PC-3 (cell line): ENCODE measurements at regions of chr5 and their contacts with region 1.

Region 1: DNA sequence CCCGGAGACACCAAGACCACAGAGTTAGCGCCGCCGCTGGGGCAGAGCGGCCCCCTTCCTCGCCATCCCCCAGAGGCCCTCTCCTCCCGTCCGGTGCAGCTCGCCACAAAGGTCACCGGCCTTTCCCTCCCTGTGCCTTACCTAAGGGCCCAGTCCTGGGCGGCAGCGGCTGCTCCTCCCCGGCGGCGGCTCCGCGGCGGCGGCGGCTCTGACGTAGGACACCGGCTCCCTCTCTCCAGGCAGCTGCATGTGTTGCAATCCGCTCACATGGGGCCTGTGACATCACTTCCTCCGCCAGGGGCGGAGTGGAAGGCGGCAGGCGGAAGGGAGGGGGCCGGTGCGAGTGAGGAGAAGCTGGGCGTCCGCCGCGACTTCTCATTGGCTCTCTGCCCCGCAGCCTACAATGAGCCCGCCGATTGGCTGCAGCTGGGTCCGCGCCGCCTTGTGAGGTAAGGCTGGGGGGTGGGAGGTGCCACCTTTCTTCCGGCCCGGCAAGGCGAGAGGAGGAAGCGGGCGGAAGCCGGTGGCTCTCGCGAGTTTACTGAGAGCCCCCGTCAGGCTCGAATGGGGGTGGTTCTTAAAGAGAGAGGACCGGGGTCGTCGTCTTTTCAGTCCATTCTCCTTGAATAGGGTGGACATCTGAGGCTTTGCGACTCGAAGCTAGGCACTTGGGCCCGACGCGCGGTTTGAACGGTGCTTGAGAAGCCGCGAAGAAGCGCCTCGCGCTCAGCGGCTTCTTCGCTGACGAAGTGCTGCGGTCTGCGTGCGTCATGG is at the start of gene ETF1:
- DNase-seq: peak; percentile 98
- ATAC-seq: peak; percentile 86
- H3K4me3 ChIP-seq: peak within 1 kb of the TSS; percentile 93
- H3K27ac ChIP-seq: peak within 1 kb of the TSS; percentile 83
- H3K4me1 ChIP-seq: peaks cover 38% of the 10 kb centered on the region
- H3K27me3 ChIP-seq: no peaks in the 10 kb centered on the region
- CTCF ChIP-seq: no peak
- total RNA-seq, gene ETF1: 57.3 and 64.1 TPM in 2 replicates

Region 2: DNA sequence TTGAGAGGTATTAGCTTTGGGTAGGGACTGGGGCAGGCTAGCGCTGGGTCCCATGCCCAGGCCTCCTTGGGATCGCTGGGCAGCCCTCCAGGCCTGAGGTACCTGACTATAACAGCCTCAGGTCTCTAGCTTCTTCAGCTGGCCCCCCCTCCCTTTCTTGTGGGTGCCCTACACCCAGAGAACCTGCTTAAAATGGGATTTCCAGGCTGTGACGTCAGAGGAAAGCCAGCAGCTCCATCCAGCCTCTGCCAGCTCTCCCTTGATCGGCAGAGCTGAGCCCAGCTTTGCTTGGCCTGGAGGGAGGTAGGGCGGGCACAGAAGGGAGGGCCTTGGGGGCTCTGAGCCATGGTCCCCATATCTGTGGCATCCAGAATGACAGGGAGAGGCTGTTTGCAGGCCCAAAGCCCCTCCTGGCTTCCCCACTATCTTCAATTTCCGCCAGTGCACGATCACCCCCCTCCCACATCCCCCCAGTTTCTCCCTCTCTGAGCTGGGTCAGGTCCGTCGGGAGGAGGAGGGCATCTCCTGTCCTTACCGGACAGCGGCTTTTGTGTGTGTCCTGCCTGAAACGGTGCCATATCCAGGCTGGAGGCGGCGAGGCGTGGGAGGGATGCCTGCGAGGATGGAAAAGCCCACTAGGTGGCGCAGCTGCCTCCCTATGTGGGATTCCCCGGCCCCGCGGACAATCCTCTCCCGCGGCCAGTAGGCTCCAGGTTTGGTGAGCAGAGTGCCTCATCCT is 93.5 kb before region 1 on chr5:
- CTCF ChIA-PET with region 1: no interaction called
- POLR2A ChIA-PET with region 1: no interaction called
- intact Hi-C with region 1: loop called (anchors 5 kb)
- DNase-seq: peak; percentile 85
- ATAC-seq: peak; percentile 97
- H3K4me3 ChIP-seq: peak overlapping the region; percentile 17; the same call in 1 of the 2 replicates
- H3K27ac ChIP-seq: no peak overlapping the region
- H3K4me1 ChIP-seq: no peaks in the 10 kb centered on the region
- H3K27me3 ChIP-seq: no peaks in the 10 kb centered on the region
- CTCF ChIP-seq: peak; percentile 82

Region 3: GRCh38 chr5:138528208-138528607 is 14.9 kb before region 1 on chr5:
- CTCF ChIA-PET with region 1: no interaction called
- POLR2A ChIA-PET with region 1: interaction called, 11 read pairs
- intact Hi-C with region 1: no loop called
- DNase-seq: no peak
- ATAC-seq: no peak
- H3K4me3 ChIP-seq: no peak overlapping the region
- H3K27ac ChIP-seq: no peak overlapping the region
- H3K4me1 ChIP-seq: peaks cover 8% of the 10 kb centered on the region
- H3K27me3 ChIP-seq: no peaks in the 10 kb centered on the region
- CTCF ChIP-seq: no peak